Left ventricle myocardium superior (tissue), 1 donor: ENCODE measurements at regions of chr5 and their contacts with region 1.

Region 1: DNA sequence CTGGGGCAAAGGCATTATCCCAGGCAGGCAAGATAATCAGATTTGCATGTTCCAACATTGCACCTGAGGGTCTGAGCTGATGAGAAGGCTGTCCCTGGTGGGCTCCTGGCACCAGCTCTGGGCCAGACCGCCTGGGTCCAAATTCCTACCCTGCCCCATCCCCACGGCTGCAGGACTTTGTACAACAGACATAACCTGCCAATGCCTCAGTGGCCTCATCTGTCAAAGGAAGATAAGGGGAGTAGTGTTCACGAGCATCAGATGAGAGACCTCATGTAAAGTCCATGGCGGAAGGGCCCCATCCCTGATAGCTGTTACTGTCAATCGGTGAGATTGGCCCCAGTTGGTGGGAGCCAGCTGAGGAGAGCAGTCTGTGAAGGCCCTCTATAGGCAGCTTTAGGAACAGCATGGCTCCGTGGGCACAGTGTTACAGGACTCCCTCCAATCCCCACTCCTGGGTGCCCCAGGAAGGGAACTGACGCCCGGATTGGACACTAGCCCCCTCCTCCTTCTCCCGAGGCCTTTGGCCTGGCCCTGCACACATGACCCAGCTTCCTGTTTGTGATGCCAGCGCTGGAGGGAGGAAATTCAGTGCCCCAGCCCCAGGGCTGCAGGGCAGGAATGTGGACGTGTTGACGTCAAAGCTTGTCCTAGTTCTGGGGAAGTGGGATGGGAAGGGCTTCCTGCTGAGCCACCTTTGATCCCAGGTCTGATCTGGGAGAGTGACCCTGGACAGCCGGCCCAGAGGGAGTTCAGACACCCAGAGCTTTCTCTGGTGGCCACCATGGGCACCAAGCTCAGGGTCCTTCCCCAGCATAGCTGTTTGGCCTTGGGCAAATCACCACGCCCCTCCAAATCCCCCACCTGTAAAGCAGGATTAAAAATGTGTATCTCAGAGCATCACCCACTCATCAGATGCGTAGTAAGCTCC is 56.2 kb downstream of the DUSP1 start:
- DNase-seq: peak; percentile 83
- ATAC-seq: peak; percentile 69

Region 2: DNA sequence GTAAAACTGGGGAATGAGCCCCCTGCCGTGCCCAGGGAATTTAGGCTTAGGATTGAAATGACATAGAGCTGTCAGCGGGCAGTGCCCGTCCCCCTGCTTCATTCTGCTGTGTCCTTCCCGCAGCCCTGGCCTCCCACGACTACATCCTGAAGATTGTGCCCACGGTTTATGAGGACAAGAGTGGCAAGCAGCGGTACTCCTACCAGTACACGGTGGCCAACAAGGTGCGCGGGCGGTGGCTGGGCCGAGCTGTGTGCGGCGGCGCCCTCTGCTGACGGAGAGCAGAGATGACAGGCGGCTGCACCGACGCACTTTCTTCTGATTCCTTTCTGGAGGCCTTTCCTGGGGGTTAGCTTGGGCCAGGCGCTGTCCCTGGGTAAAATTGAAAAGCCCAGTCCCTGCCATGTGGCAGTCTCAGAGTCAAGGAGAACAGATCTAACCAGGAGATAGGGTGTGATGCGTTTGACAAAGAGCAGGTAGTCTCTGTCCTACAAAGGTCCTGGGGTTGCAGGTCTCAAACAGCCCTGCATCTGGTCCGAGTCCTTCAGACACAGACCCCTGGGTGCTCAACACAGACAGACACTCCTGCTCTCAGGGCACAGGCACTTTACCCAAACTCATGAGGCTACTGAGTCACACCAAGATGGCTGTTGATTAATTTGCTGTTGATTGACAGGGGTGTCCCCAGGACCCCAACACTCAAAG is 217.7 kb after region 1 on chr5:
- intact Hi-C with region 1: loop called (anchors 5 kb)
- DNase-seq: peak; percentile 86
- ATAC-seq: peak; percentile 87

Region 3: GRCh38 chr5:172969921-172970320 is 255.2 kb after region 1 on chr5:
- intact Hi-C with region 1: no loop called
- DNase-seq: no peak
- ATAC-seq: no peak